Activated naive CD4-positive, alpha-beta T cell treated with anti-CD3 and anti-CD28 coated beads, Interleukin-2, amount 10 ng/mL, durations not matched to agents 7 days and 5 days (primary cell): ENCODE measurements at regions of chr1 and their contacts with region 1.

Region 1: DNA sequence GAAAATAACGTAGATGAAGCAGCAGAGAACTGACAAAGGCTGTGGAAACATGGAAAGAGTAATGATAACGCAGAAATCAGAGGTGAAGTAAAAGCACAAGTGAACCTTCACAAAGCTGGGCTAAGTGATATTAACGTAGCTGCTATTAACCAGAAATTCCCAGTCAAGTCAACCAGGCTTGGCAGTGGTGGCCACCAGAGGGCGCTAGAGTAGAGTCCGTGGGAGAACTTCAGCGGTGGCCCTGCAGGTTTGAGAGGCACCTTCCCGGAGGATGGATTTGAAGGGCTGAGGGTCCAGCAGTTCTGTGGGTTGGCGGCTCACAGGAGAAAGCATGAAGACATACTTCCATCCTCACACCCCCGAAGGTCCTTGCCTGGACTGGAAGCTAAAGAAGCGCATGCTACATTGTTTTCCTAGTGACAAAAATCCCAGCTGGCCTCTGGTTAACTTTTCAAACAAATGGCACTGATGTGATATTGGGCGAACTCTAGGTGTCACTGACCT is 81.7 kb upstream of the ZNF648 start:
- DNase-seq: peak; percentile 91
- H3K4me3 Mint-ChIP-seq: no peak overlapping the region
- H3K27ac Mint-ChIP-seq: peak overlapping the region; percentile 9
- H3K4me1 Mint-ChIP-seq: peaks cover 36% of the 10 kb centered on the region
- H3K27me3 Mint-ChIP-seq: peaks cover 18% of the 10 kb centered on the region

Region 2: DNA sequence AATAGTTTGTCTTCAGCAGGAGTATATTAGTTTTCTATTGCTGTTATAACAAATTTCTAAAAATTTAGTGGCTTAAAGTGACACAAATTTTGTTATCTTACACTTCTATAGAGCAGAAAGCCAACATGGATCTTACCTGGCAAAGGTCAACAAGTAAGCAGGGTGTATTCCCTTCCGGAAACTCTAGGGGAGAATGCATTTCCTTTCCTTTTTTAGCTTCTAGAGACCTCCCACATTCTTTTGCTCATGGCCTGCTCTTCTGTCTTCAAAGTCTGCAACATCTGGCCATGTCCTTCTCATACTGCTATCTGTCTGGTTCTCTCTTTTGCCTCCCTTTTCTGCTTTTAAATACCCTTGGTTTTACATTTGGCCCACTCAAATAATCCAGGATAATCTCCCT is 324.3 kb before region 1 on chr1:
- CTCF ChIA-PET with region 1: no interaction called
- DNase-seq: no peak
- H3K4me3 Mint-ChIP-seq: no peak overlapping the region
- H3K27ac Mint-ChIP-seq: no peak overlapping the region
- H3K4me1 Mint-ChIP-seq: no peaks in the 10 kb centered on the region
- H3K27me3 Mint-ChIP-seq: peaks cover 7% of the 10 kb centered on the region

Region 3: GRCh38 chr1:182157187-182157586 is 14.0 kb after region 1 on chr1:
- CTCF ChIA-PET with region 1: interaction called, 11 read pairs
- DNase-seq: no peak
- H3K4me3 Mint-ChIP-seq: no peak overlapping the region
- H3K27ac Mint-ChIP-seq: no peak overlapping the region
- H3K4me1 Mint-ChIP-seq: peaks cover 19% of the 10 kb centered on the region
- H3K27me3 Mint-ChIP-seq: peaks cover 10% of the 10 kb centered on the region

Region 4: GRCh38 chr1:182198049-182198501 is 54.9 kb after region 1 on chr1:
- CTCF ChIA-PET with region 1: interaction called, 23 read pairs
- DNase-seq: no peak
- H3K4me3 Mint-ChIP-seq: no peak overlapping the region
- H3K27ac Mint-ChIP-seq: no peak overlapping the region
- H3K4me1 Mint-ChIP-seq: no peaks in the 10 kb centered on the region
- H3K27me3 Mint-ChIP-seq: peaks cover 9% of the 10 kb centered on the region

Region 5: DNA sequence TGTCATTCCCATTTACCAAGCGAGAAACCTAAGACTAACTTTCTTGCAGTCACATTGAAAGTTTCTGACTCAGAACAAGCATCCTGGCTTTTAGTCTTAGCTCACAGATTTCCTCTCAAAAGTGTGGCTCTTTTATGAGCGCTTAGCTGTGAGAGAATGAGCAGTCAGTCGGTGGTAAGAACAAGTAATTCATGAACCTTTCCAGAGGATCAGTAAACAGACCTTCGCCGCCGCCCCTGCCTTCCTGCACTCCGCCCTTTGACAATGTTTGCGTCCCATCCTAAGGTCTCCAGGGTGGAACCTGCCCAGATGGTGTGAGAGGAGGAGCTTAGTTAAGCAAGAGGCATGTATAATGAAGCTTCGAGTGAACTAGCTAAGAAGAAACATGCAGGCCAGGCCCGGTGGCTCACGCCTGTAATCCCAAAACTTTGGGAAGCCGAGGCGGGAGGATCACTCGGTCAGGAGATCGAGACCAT is 106.0 kb after region 1 on chr1:
- CTCF ChIA-PET with region 1: interaction called, 21 read pairs
- DNase-seq: no peak
- H3K4me3 Mint-ChIP-seq: no peak overlapping the region
- H3K27ac Mint-ChIP-seq: no peak overlapping the region
- H3K4me1 Mint-ChIP-seq: peaks cover 14% of the 10 kb centered on the region
- H3K27me3 Mint-ChIP-seq: no peaks in the 10 kb centered on the region

Region 6: GRCh38 chr1:182259229-182259872 is 116.1 kb after region 1 on chr1:
- CTCF ChIA-PET with region 1: interaction called, 13 read pairs
- DNase-seq: peak; percentile 64
- H3K4me3 Mint-ChIP-seq: peak overlapping the region; percentile 8
- H3K27ac Mint-ChIP-seq: peak overlapping the region; percentile 91
- H3K4me1 Mint-ChIP-seq: peaks cover 25% of the 10 kb centered on the region
- H3K27me3 Mint-ChIP-seq: no peaks in the 10 kb centered on the region

Region 7: GRCh38 chr1:182301467-182302198 is 158.4 kb after region 1 on chr1:
- CTCF ChIA-PET with region 1: interaction called, 38 read pairs
- DNase-seq: no peak
- H3K4me3 Mint-ChIP-seq: no peak overlapping the region
- H3K27ac Mint-ChIP-seq: no peak overlapping the region
- H3K4me1 Mint-ChIP-seq: peaks cover 18% of the 10 kb centered on the region
- H3K27me3 Mint-ChIP-seq: no peaks in the 10 kb centered on the region

Region 8: DNA sequence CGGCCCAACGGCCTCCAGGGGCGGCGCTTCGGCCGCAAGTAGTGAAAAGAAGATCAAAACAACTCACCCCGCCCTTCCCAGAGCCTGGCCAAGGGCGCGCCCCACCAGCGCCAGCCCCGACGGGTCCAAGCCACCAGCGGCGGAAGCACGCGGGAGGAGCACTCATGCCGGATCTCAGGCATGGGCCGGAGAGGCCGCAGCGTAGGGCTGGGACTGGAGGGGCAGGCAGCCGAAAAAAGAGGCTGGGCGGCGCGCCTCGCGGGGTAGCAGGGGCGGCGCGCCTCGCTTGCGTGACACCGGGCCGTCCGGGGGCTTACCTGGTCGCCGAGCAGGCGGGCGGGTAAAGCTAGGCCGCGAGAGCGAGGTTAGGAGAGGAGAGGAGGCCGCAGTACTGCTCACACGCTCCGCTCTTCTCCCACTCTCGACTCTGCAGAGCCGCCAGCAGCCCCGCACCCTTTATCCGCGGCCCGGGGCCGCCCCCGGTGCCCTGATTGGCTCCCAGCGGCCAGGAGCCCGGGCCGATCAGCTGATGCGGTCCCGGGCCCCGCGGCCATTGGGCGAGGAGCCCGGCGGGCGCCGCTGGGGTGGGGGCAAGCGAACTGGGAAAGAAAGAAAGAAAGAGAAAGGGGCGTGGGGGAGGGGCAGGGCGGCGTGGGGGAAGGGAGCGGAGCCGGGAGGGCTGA is 248.3 kb after region 1 on chr1 and contains the start of gene GLUL:
- CTCF ChIA-PET with region 1: interaction called, 251 read pairs
- DNase-seq: peak; percentile 88
- H3K4me3 Mint-ChIP-seq: peak within 1 kb of the TSS; percentile 99
- H3K27ac Mint-ChIP-seq: peak within 1 kb of the TSS; percentile 97
- H3K4me1 Mint-ChIP-seq: peaks cover 52% of the 10 kb centered on the region
- H3K27me3 Mint-ChIP-seq: peaks cover 23% of the 10 kb centered on the region

Region 9: DNA sequence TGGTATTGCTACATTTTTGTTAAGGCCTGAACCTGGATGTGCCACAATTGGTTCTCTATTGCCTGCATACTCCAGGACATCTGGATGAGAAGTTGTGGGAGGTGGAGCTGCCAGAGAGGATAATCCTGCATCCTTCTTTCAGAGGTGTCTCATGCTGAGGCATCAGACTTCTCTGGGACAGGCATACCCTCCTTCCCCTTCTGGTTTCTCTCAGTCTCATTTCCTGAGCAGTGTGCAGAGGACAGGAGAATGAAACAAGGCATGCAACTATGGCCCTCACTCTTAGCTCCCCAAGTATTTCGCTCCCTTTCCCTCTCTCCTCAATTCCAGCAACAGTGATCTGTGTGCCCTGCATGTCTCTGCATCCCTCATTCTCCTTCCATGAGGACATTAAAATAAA is 299.1 kb after region 1 on chr1:
- CTCF ChIA-PET with region 1: no interaction called
- DNase-seq: no peak
- H3K4me3 Mint-ChIP-seq: no peak overlapping the region
- H3K27ac Mint-ChIP-seq: no peak overlapping the region
- H3K4me1 Mint-ChIP-seq: peaks cover 3% of the 10 kb centered on the region
- H3K27me3 Mint-ChIP-seq: peaks cover 13% of the 10 kb centered on the region